ENCODE measurements at regions of chr12 and their contacts with region 1.

Region 1: DNA sequence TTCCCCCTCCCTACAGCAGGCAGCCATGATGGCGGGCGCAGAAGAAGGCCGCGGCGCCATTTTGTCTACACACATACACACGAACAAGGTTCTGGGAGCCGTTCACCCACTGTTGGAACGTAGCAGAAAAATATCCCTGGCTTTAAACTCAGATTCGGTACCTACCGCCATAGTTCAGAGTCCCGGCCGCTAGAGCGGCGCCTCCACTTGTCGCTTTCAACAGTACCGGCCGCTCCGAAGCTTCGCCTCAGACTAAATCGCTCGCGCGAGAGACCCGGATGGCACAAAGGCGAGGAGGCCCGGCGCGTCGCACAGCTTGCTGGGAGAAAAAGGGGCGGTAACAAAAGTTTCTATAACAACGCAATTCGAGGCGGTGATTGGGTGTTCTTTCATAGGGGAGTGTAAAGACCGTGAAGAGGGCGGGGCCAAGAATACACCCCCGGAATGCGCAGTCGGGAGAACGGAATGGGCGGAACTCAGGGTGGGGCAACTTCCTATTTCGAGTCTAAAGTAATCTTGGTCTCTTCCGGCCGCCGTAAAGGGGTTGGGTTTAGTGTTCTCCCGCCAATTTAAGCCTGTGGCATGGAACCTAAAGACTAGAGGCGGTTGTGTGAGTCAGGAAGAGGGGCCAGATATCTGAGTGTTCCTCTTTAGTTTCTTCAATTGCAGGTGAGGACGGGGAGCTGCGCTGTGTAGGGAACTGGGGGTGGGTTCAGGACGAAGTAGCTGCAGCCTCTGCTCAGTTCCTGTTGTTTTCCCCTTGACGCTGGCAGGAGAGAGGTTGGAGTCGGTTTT is at the starts of genes KNTC1 and RSRC2:
- DNase-seq: peak; percentile 99
- H3K4me3 Mint-ChIP-seq: no peak within 1 kb of the TSS
- H3K27ac Mint-ChIP-seq: no peak within 1 kb of the TSS
- H3K4me1 Mint-ChIP-seq: peaks cover 35% of the 10 kb centered on the region
- H3K27me3 Mint-ChIP-seq: no peaks in the 10 kb centered on the region
- total RNA-seq, gene KNTC1: 121 and 122 TPM in 2 replicates
- total RNA-seq, gene RSRC2: 105 and 107 TPM in 2 replicates

Region 2: GRCh38 chr12:122225683-122226407 is 301.0 kb before region 1 on chr12 and contains the start of gene DIABLO:
- intact Hi-C with region 1: loop called (anchors 10 kb)
- DNase-seq: peak; percentile 100
- H3K4me3 Mint-ChIP-seq: peak within 1 kb of the TSS; percentile 88
- H3K27ac Mint-ChIP-seq: peak within 1 kb of the TSS; percentile 89
- H3K4me1 Mint-ChIP-seq: peaks cover 22% of the 10 kb centered on the region
- H3K27me3 Mint-ChIP-seq: no peaks in the 10 kb centered on the region
- total RNA-seq, gene DIABLO: 54.7 and 56.5 TPM in 2 replicates

Region 3: DNA sequence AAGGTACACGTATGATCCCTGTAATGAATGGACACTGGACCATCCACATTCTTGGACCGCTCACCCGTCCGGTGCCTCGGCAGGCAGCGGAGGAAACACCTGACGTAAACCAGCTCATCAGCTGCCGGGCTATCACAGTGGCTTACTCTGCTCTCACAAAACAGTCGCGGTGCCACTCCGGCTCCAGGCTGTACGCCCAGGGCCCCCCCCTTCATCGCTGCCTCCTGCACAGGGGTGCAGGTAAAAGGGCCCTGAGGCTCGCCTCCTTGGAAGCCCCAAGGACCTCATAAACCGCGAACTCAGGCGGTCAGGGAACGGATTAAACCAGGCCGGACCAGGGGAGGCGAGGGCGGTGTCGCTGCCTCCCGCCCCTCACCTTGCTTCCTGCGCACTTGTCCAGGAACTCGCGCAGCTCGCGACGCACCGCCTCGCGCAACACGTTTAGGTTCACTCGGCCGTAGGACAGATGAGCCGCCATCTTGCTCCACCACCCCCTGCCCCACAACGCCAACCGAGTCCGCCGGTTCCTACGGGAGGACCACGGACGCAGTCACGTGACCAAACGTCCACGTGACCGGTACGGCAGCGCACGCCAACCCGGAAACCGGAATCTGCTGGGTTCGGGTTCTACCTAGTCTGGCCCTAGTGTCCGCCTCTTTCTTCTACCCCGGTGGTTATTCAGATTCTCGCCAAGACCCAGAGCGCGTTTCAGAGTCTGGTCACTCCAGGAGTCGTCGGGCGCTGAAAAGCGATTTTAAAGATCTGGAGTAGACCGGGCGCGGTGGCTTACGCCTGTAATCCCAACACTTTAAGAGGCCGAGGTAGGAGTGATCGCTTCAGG is 260.7 kb before region 1 on chr12 and contains the start of gene VPS33A:
- intact Hi-C with region 1: loop called (anchors 2 kb)
- DNase-seq: peak; percentile 95
- H3K4me3 Mint-ChIP-seq: peak within 1 kb of the TSS; percentile 96
- H3K27ac Mint-ChIP-seq: peak within 1 kb of the TSS; percentile 99
- H3K4me1 Mint-ChIP-seq: peaks cover 7% of the 10 kb centered on the region
- H3K27me3 Mint-ChIP-seq: no peaks in the 10 kb centered on the region
- total RNA-seq, gene VPS33A: 25.3 and 26.8 TPM in 2 replicates

Region 4: DNA sequence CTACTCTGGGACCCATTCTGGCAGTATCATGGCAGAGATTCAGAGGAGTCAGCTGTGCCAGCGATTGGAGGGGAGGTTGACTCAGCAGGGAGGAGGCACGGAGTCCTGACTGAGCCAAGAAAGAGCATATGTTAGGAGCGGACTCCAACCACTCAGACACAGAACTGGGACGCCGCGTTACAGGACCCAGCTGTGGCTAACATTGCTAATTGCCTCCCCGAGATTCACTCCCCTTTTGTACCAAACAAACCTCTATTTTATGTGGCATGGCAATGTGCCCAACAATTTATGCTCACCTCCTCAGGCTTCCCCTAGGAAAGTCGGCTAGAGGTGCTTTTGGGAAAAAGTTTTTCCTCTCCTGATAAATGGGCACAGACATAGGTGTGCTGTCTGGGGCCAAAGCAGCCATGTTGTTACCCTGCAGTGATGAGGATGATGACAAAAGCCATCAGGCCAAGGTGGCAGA is 89.2 kb before region 1 on chr12:
- intact Hi-C with region 1: no loop called
- DNase-seq: no peak
- H3K4me3 Mint-ChIP-seq: no peak overlapping the region
- H3K27ac Mint-ChIP-seq: no peak overlapping the region
- H3K4me1 Mint-ChIP-seq: no peaks in the 10 kb centered on the region
- H3K27me3 Mint-ChIP-seq: no peaks in the 10 kb centered on the region

Region 5: DNA sequence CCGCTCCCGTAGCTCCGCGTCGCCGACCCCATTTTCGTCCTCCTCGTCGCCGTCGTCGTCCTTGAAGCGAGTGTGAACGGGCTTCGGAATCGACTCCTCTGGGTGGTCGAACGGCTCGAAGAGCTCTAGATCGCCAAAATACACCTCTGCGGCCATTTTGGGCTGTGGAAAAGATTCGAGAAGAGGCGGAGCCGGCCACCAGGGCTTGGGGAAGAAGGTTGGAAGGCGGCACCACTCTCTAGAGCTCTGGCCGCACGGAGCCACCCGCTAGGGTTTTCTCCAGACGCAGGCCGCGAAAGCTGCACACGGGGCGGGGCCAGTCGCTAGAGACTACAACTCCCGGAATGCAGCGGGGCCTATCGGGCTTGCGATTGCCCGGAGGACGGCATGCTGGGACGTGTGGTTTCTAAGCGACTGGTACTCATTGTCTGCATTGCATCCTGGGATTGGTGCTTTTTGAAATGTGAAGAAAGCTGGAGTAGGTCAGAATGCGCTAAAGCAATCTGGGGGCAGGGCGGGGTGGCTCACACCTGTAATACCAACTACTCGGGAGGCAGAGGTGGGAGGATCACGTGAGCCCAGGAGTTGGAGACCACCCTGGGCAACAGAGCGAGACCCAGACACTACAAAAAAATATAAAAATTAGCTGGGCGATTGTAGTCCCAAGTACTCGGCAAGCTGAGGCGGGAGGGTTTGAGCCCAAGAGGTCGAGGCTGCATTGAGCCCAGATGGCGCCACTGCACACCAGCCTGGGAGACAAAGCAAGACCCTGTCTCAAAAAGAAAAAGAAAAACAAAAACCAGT is 26.0 kb before region 1 on chr12 and contains the start of gene ZCCHC8:
- intact Hi-C with region 1: loop called (anchors 1 kb)
- DNase-seq: peak; percentile 96
- H3K4me3 Mint-ChIP-seq: peak within 1 kb of the TSS; percentile 96
- H3K27ac Mint-ChIP-seq: peak within 1 kb of the TSS; percentile 98
- H3K4me1 Mint-ChIP-seq: peaks cover 28% of the 10 kb centered on the region
- H3K27me3 Mint-ChIP-seq: no peaks in the 10 kb centered on the region
- total RNA-seq, gene ZCCHC8: 38.6 and 39.7 TPM in 2 replicates

Region 6: GRCh38 chr12:122646517-122647217 is 119.8 kb after region 1 on chr12:
- intact Hi-C with region 1: loop called (anchors 1 kb)
- DNase-seq: peak; percentile 39
- H3K4me3 Mint-ChIP-seq: peak overlapping the region; percentile 44
- H3K27ac Mint-ChIP-seq: peak overlapping the region; percentile 60
- H3K4me1 Mint-ChIP-seq: peaks cover 14% of the 10 kb centered on the region
- H3K27me3 Mint-ChIP-seq: no peaks in the 10 kb centered on the region

Region 7: DNA sequence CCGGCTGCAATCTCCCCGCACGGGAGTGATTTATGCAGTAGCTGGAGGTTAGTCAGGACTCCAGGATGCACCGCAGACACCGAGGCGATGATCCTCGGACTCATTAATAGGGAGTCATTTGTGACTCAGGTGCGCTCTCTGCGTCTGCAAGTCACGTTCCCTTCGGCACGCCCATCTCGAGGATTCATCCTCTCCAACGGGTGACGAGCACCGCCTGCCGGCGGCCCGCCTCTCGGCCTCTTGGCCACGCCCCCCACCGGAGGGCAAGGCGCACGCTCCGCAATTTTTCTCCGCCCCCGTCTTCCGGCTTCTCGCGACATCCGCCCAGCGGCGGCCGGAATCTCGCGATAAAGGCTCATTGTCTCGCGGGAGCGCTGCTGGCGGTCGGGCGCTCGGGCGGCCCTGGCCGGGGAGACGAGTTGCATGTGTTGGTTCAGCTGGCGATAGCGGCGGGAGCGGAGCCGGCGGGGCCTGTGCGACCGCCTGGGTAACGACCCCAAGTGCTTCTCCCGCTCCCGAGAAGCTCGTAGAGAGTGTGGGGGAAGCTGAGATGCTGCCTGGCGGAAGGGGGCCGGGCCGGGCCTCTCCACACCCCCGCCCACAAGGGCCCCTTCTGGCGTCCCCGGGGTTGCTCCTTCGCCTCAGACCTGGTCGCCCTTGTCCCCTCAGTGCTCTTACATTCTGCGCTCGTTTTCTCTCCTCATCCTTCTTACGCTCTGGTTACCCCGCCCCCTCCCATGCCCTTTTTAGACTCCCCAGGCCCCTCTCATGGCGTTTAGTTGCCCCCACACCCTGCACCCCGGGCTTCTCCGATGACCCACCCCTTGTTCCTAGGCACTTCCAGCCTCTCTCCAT is 225.8 kb after region 1 on chr12 and contains the start of gene DENR:
- intact Hi-C with region 1: loop called (anchors 1 kb)
- DNase-seq: peak; percentile 99
- H3K4me3 Mint-ChIP-seq: peak within 1 kb of the TSS; percentile 89
- H3K27ac Mint-ChIP-seq: peak within 1 kb of the TSS; percentile 90
- H3K4me1 Mint-ChIP-seq: peaks cover 42% of the 10 kb centered on the region
- H3K27me3 Mint-ChIP-seq: no peaks in the 10 kb centered on the region
- total RNA-seq, gene DENR: 76.7 and 79.6 TPM in 2 replicates

Region 8: DNA sequence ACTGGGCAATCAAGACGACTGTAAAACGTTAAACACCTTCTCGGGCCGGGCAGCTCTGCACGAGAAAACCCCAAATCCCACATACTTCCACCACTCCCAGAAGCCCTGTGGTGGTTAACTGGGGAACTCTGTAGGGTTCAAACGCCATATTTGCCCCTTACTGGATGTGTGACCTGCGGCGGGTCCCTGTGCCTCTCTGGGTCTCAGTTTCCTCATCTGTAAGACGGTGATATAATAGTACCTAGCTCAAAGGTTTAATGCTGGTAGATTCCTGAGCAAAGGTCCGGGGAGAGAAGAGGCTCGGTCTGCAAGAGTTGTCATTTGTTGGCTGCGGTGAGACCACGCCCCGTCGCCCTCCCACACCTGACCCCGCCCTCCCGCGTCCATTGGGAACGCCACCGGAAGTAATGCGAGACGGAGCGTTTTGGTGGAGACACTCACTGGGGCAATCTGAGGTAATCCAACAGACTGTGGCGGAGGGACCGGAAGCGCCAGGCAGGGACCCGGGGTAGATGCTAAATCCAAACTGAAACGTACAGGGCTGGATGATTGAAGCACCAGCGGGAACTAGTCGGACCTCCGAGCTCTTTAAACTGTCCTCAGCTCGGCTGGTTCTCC is 447.5 kb after region 1 on chr12:
- intact Hi-C with region 1: loop called (anchors 1 kb)
- DNase-seq: peak; percentile 98
- H3K4me3 Mint-ChIP-seq: peak overlapping the region; percentile 93
- H3K27ac Mint-ChIP-seq: peak overlapping the region; percentile 98
- H3K4me1 Mint-ChIP-seq: peaks cover 11% of the 10 kb centered on the region
- H3K27me3 Mint-ChIP-seq: no peaks in the 10 kb centered on the region

Measured in activated T-helper 2 cell treated with anti-CD3 and anti-CD28 coated beads, Interferon-gamma antibody, Interleukin-2, Interleukin-4, amounts not matched to agents 10 μg/mL and 5 μg/mL and 100 μg/mL, durations not matched to agents 14 hours and 24 hours and 36 hours (primary cell).